Activated CD4-positive, alpha-beta T cell treated with anti-CD3 and anti-CD28 coated beads for 36 hours (primary cell): ENCODE measurements at regions of chr2 and their contacts with region 1.

Region 1: DNA sequence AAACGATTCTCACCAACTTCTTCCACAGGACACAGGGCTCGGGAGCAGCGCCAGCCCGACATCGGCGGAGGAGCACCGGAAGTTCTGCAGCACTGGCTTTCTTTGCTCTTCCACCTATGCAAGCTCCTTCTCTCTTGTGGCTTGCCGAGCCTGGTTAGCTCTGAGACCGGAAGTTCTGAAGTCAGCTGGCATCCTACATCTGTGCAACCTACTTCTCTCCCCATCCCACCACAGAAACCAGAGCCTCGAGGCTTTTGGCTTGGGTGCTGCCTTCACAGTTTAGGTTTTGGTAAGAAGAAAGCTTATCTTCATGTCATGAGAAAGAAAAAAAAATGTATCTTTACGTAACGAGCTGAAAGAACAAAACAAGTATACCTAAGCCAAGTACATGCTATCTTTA is 111.7 kb downstream of the ANKRD44 start:
- DNase-seq: peak; percentile 93
- ATAC-seq: peak; percentile 93
- H3K4me3 Mint-ChIP-seq: peak overlapping the region; percentile 77
- H3K27ac Mint-ChIP-seq: peak overlapping the region; percentile 91
- H3K4me1 Mint-ChIP-seq: peaks cover 90% of the 10 kb centered on the region
- H3K27me3 Mint-ChIP-seq: no peaks in the 10 kb centered on the region

Region 2: DNA sequence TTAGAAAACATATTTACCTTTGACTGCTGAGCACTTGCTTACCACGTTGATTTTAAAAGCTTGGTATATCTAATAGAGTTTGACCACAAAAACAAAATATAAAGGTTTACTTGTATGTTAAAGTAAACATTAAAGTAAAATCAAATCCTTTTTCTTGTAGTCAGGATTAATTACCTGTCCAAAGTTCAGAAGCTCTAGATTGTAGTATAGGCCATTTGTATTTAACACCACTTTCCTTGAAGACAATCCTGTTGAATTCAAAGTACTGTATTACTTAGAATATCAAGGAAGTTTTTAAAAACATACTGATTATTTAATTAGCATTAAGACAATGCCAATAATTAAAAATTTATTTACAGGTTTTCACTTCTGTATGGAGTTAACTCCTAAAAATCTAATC is 325.4 kb before region 1 on chr2:
- CTCF ChIA-PET with region 1: no interaction called
- POLR2A ChIA-PET with region 1: no interaction called
- intact Hi-C with region 1: no loop called
- DNase-seq: no peak
- ATAC-seq: no peak
- H3K4me3 Mint-ChIP-seq: no peak overlapping the region
- H3K27ac Mint-ChIP-seq: no peak overlapping the region
- H3K4me1 Mint-ChIP-seq: no peaks in the 10 kb centered on the region
- H3K27me3 Mint-ChIP-seq: no peaks in the 10 kb centered on the region

Region 3: GRCh38 chr2:196987649-196988364 is 211.1 kb before region 1 on chr2:
- CTCF ChIA-PET with region 1: no interaction called
- POLR2A ChIA-PET with region 1: no interaction called
- intact Hi-C with region 1: loop called in 1 of 2 experiments (anchors 2 kb)
- DNase-seq: peak; percentile 62
- ATAC-seq: peak; percentile 93
- H3K4me3 Mint-ChIP-seq: peak overlapping the region; percentile 38
- H3K27ac Mint-ChIP-seq: peak overlapping the region; percentile 98
- H3K4me1 Mint-ChIP-seq: peaks cover 65% of the 10 kb centered on the region
- H3K27me3 Mint-ChIP-seq: no peaks in the 10 kb centered on the region

Region 4: DNA sequence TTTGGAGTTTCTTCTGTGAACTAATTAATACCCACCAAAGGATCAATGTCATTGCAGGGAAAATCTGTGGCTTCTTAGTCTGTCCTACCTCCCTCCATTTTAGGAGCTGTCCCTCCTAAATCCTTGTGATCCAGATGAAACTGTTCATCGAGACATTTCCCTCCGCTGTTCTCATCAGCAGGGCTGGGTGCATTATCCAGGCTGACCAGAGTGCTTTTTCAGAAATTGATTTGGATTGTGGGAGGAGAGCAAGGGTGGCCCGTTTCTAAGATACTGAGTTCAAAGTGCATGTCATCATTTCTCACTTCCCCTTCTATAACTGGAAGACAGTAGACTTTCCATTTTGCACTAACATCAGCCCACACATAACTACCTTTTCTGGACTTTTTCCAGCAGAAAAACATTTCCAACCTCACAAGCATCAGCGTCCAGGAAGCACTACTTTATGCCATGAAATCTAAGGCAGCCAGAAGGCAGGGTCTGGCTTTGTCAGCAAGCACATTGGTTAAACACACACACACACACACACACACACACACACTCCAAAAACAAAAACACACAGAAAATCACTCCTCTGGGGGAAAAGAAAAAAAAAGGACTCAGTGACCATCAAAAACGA is 17.6 kb after region 1 on chr2:
- CTCF ChIA-PET with region 1: interaction called, 6 read pairs
- POLR2A ChIA-PET with region 1: interaction called, 6 read pairs
- intact Hi-C with region 1: loop called in 1 of 2 experiments (anchors 1 kb)
- DNase-seq: no peak
- ATAC-seq: peak; percentile 54
- H3K4me3 Mint-ChIP-seq: peak overlapping the region; percentile 70
- H3K27ac Mint-ChIP-seq: peak overlapping the region; percentile 99
- H3K4me1 Mint-ChIP-seq: peaks cover 88% of the 10 kb centered on the region
- H3K27me3 Mint-ChIP-seq: no peaks in the 10 kb centered on the region

Region 5: GRCh38 chr2:197255543-197255942 is 56.7 kb after region 1 on chr2:
- CTCF ChIA-PET with region 1: interaction called, 3 read pairs
- POLR2A ChIA-PET with region 1: no interaction called
- intact Hi-C with region 1: loop called (anchors 1 to 2 kb)
- DNase-seq: peak; percentile 90
- ATAC-seq: peak; percentile 89
- H3K4me3 Mint-ChIP-seq: peak overlapping the region; percentile 75
- H3K27ac Mint-ChIP-seq: peak overlapping the region; percentile 96
- H3K4me1 Mint-ChIP-seq: peaks cover 80% of the 10 kb centered on the region
- H3K27me3 Mint-ChIP-seq: no peaks in the 10 kb centered on the region

Region 6: GRCh38 chr2:197434541-197435513 is 235.9 kb after region 1 on chr2 and contains the start of gene SF3B1:
- CTCF ChIA-PET with region 1: no interaction called
- POLR2A ChIA-PET with region 1: no interaction called
- intact Hi-C with region 1: loop called in 1 of 2 experiments (anchors 5 kb)
- DNase-seq: peak; percentile 100
- ATAC-seq: peak; percentile 94
- H3K4me3 Mint-ChIP-seq: peak within 1 kb of the TSS; percentile 98
- H3K27ac Mint-ChIP-seq: peak within 1 kb of the TSS; percentile 99
- H3K4me1 Mint-ChIP-seq: peaks cover 44% of the 10 kb centered on the region
- H3K27me3 Mint-ChIP-seq: no peaks in the 10 kb centered on the region
- total RNA-seq, gene SF3B1: 262 to 277 TPM